Ovary (tissue), 10 donors: ENCODE measurements at regions of chr15 and their contacts with region 1.

Region 1: DNA sequence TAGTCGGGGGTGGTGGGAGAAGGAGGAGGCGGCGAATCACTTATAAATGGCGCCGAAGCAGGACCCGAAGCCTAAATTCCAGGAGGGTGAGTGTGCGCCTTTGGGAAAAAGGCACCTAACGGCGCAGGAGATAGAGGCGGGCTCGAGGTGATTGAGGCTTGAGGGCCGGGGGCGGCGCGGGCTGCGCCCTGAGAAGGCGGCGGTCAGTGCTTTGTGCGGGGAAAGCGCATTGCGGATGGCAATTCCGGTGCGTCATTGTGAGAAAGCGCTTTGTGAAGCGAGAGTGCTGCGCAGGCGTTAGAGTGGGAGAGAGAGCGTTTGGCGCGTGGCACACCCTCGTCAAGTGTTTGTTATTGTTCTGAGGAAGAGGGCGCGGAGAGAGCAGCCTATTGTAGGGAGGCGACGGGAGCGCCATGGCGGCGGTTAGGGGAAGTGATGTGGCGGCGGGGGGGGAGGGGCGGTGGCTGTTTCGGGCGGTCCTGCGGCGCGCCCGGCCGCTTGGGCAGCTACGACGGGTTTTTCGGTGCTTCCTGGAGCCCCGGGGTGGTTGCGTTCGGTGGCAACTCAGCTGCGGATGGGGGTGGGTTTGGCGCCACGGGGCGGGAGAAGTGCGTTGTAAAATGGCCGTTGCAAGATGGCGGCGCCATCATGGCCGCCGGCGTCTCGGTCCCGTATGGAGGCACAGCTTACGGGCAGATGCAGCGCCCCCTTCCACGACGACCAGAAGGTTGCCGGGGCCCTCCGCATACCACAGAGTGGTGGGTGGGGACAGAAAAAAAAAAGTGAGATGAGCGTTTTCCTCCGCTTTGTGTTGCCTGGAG is 492 bp downstream of the MORF4L1 start:
- DNase-seq: peak; percentile 68 to 85 (median 78)
- H3K4me3 ChIP-seq: peak overlapping the region; percentile 100
- H3K27ac ChIP-seq: peak overlapping the region; percentile 98 to 99
- H3K4me1 ChIP-seq: peaks cover 6% of the 10 kb centered on the region
- H3K27me3 ChIP-seq: no peaks in the 10 kb centered on the region
- CTCF ChIP-seq: peak in 1 of 3 donors; percentile 26
- EP300 ChIP-seq: no peak
- POLR2A ChIP-seq: no peak

Region 2: GRCh38 chr15:78750566-78750965 is 122.6 kb before region 1 on chr15:
- intact Hi-C with region 1: loop called in 1 of 4 experiments (anchors 10 kb)
- DNase-seq: peak in 2 of 5 donors; percentile 26 to 32
- H3K4me3 ChIP-seq: no peak overlapping the region
- H3K27ac ChIP-seq: no peak overlapping the region
- H3K4me1 ChIP-seq: peaks cover 4% of the 10 kb centered on the region
- H3K27me3 ChIP-seq: no peaks in the 10 kb centered on the region
- CTCF ChIP-seq: no peak
- EP300 ChIP-seq: no peak
- POLR2A ChIP-seq: no peak

Region 3: GRCh38 chr15:78811124-78811824 is 61.9 kb before region 1 on chr15 and contains the start of gene ADAMTS7:
- intact Hi-C with region 1: loop called in 1 of 4 experiments (anchors 5 kb)
- DNase-seq: peak; percentile 81 to 88 (median 86)
- H3K4me3 ChIP-seq: peak within 1 kb of the TSS; percentile 51
- H3K27ac ChIP-seq: peak within 1 kb of the TSS; percentile 62 to 73
- H3K4me1 ChIP-seq: peaks cover 3% of the 10 kb centered on the region
- H3K27me3 ChIP-seq: no peaks in the 10 kb centered on the region
- CTCF ChIP-seq: peak; percentile 38 to 76 (median 73)
- EP300 ChIP-seq: no peak
- POLR2A ChIP-seq: no peak
- total RNA-seq, gene ADAMTS7: 3.5 to 16.5 (median 8.8) TPM

Region 4: GRCh38 chr15:78822514-78822913 is 50.7 kb before region 1 on chr15:
- intact Hi-C with region 1: no loop called
- DNase-seq: no peak
- H3K4me3 ChIP-seq: no peak overlapping the region
- H3K27ac ChIP-seq: no peak overlapping the region
- H3K4me1 ChIP-seq: peaks cover 5% of the 10 kb centered on the region
- H3K27me3 ChIP-seq: no peaks in the 10 kb centered on the region
- CTCF ChIP-seq: no peak
- EP300 ChIP-seq: no peak
- POLR2A ChIP-seq: no peak

Region 5: DNA sequence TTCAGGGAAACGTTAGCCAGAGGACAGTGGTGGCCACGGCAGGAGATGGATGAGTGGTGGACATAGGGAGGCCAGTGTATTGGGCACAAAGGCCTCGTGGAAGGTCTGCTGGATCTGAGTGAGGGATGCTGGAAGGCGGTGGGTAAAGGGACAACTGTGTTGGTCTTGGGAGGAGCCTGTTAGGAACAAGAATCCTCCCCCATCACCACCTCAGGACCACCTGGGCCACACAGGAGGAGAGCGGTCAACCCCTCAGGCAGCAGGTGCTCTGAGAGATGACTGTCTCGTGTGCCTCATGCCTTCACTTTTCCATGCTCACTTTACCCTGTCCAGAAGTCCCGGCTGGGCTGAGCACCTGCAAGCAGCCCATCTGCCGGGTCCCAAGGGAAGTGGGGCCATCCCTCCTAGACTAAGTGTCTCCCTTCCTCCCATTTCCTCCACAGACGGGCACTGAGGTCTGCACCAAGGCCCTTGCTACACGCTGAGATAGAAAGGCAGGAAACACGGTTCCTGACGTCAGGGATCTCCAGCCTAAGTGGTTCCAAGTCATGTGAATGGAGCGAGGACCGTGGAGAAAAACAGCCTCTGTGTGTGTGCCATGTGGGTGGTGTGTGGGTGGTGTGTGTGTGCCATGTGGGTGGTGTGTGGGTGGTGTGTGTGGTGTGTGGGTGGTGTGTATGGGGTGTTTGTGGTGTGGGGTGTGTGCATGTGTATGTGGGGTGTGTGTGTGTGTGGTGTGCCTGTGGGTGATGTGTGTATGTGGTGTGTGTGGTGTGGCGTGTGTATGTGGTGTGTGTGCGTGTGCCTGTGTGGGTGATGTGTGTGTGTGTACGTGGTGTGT is 119.5 kb after region 1 on chr15:
- intact Hi-C with region 1: no loop called
- DNase-seq: peak in 1 of 5 donors; percentile 15
- H3K4me3 ChIP-seq: no peak overlapping the region
- H3K27ac ChIP-seq: no peak overlapping the region
- H3K4me1 ChIP-seq: peaks cover 3% of the 10 kb centered on the region
- H3K27me3 ChIP-seq: no peaks in the 10 kb centered on the region
- CTCF ChIP-seq: no peak
- EP300 ChIP-seq: no peak
- POLR2A ChIP-seq: no peak

Region 6: GRCh38 chr15:79051029-79051428 is 177.8 kb after region 1 on chr15:
- intact Hi-C with region 1: no loop called
- DNase-seq: no peak
- H3K4me3 ChIP-seq: no peak overlapping the region
- H3K27ac ChIP-seq: no peak overlapping the region
- H3K4me1 ChIP-seq: no peaks in the 10 kb centered on the region
- H3K27me3 ChIP-seq: no peaks in the 10 kb centered on the region
- CTCF ChIP-seq: no peak
- EP300 ChIP-seq: no peak
- POLR2A ChIP-seq: no peak

Region 7: GRCh38 chr15:79170256-79170664 is 297.1 kb after region 1 on chr15:
- intact Hi-C with region 1: no loop called
- DNase-seq: no peak
- H3K4me3 ChIP-seq: no peak overlapping the region
- H3K27ac ChIP-seq: no peak overlapping the region
- H3K4me1 ChIP-seq: no peaks in the 10 kb centered on the region
- H3K27me3 ChIP-seq: no peaks in the 10 kb centered on the region
- CTCF ChIP-seq: no peak
- EP300 ChIP-seq: no peak
- POLR2A ChIP-seq: no peak